Naive thymus-derived CD4-positive, alpha-beta T cell (primary cell): ENCODE measurements at regions of chr7 and their contacts with region 1.

Region 1: DNA sequence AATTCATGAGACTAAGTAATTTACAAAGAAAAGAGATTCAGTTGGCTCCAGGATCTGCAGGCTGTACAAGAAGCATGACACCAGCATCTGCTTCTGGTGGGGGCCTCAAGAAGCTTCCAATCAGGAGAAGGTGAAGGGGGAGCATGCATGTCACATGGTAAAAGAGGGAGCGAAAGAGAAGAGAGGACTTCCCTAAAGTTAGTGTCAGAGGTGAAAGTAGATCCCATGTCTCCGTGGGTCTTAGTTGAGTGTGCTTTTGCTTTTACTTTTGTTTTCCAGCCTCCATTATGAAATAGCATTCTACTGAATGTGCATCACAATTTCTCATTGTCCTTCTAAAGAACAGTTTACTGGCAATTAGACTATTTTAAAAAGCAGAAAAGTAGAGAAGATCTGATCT is 213.6 kb upstream of the FZD1 start:
- DNase-seq: peak in 3 of 9 donors; percentile 1 to 14 (median 8)
- ATAC-seq: peak; percentile 64
- H3K4me3 ChIP-seq: no peak overlapping the region
- H3K4me3 Mint-ChIP-seq: peak overlapping the region; percentile 27 to 82 (median 73)
- H3K27ac ChIP-seq: no peak overlapping the region
- H3K27ac Mint-ChIP-seq: peak overlapping the region; percentile 12 to 94 (median 75)
- H3K4me1 ChIP-seq: peaks cover 0 to 4% of the 10 kb centered on the region in 2 donors
- H3K4me1 Mint-ChIP-seq: peaks cover 3 to 16% (median 13%) of the 10 kb centered on the region in 7 donors
- H3K27me3 ChIP-seq: no peaks in the 10 kb centered on the region
- H3K27me3 Mint-ChIP-seq: peaks cover 0 to 4% (median 0%) of the 10 kb centered on the region in 5 donors

Region 2: DNA sequence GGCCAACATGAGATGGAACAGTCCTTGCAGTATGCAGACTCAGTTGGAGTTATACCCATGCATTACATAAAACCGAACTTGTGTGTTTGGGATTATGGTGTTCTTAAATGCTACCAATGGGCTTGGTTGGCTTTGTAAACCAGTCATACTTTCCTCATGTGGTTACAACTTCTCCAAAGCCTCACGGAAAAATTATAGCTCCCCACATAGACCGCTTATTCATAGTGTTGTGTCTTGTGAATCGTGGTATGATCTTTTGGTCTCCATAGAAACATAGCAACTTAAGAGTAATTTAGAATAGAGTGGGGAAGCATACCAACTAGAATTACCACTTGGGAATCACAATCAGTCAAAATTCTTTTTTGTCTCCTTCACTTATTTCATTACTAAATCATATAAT is 101.2 kb after region 1 on chr7:
- CTCF ChIA-PET with region 1: no interaction called
- POLR2A ChIA-PET with region 1: no interaction called
- intact Hi-C with region 1: no loop called
- DNase-seq: no peak
- ATAC-seq: no peak
- H3K4me3 ChIP-seq: no peak overlapping the region
- H3K4me3 Mint-ChIP-seq: no peak overlapping the region
- H3K27ac ChIP-seq: no peak overlapping the region
- H3K27ac Mint-ChIP-seq: no peak overlapping the region
- H3K4me1 ChIP-seq: no peaks in the 10 kb centered on the region
- H3K4me1 Mint-ChIP-seq: no peaks in the 10 kb centered on the region
- H3K27me3 ChIP-seq: no peaks in the 10 kb centered on the region
- H3K27me3 Mint-ChIP-seq: peaks cover 0 to 4% (median 0%) of the 10 kb centered on the region in 5 donors

Region 3: GRCh38 chr7:91264046-91264923 is 213.6 kb after region 1 on chr7 and contains the start of gene FZD1:
- CTCF ChIA-PET with region 1: no interaction called
- POLR2A ChIA-PET with region 1: no interaction called
- intact Hi-C with region 1: loop called in 1 of 2 experiments (anchors 1 kb)
- DNase-seq: peak in 8 of 9 donors; percentile 7 to 77 (median 44)
- ATAC-seq: peak; percentile 89
- H3K4me3 ChIP-seq: peak within 1 kb of the TSS; percentile 47
- H3K4me3 Mint-ChIP-seq: peak within 1 kb of the TSS; percentile 87 to 96 (median 92)
- H3K27ac ChIP-seq: no peak within 1 kb of the TSS
- H3K27ac Mint-ChIP-seq: peak within 1 kb of the TSS in 3 of 9 donors; percentile 42 to 75 (median 63)
- H3K4me1 ChIP-seq: peaks cover 0 to 9% of the 10 kb centered on the region in 2 donors
- H3K4me1 Mint-ChIP-seq: peaks cover 0 to 26% (median 12%) of the 10 kb centered on the region in 7 donors
- H3K27me3 ChIP-seq: no peaks in the 10 kb centered on the region
- H3K27me3 Mint-ChIP-seq: peaks cover 16 to 60% (median 41%) of the 10 kb centered on the region in 5 donors
- total RNA-seq, gene FZD1: 0.24 to 3.4 (median 0.64) TPM